ENCODE measurements at regions of chr14 and their contacts with region 1.

Region 1: GRCh38 chr14:24013654-24014514 is 25.2 kb downstream of the DHRS4L2 start:
- DNase-seq: peak; percentile 60 to 75
- H3K4me3 ChIP-seq: no peak overlapping the region
- H3K4me1 ChIP-seq: no peaks in the 10 kb centered on the region
- H3K27me3 ChIP-seq: no peaks in the 10 kb centered on the region

Region 2: DNA sequence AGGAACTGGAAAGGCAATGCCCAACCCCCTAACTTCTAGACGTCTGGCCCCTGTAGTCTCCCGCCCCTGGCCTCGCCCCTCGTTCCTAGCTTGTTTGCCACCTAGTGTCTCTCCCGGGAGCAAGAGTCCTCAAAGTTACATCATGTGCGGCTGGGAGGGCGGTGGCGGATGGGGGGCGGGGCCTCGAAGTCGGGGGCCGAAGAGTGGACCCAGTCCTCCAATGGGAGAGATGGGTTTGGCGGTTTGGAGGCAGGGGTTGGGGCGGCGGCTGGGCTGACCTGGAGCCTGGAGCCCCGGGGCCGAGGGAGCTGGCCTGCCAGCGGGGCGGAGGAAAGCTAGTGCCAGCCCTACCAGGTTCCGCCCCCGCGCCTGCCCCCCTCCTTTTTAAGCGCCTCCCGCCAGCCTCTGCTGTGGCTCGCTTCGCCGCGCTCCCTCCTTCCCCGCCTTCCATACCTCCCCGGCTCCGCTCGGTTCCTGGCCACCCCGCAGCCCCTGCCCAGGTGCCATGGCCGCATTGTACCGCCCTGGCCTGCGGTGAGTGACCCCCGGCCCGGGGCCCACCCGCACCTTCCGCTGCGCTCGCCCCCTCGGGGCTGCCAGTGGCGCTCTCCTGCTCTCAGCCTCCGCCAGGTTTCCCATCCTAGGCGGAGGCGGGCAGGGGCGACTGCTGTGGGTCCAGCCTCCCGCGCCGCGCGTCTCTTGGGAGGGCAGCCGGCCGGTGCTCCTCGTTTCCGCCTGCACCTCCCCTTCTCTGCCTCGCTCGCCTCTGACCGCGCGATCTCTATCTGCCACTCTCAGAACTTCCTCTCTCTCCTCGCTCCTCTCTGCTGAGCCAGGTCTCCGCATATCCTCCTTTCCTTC is 80.2 kb after region 1 on chr14 and contains the start of gene PCK2:
- in situ Hi-C with region 1: loop called (anchors 10 kb)
- DNase-seq: peak; percentile 92 to 98
- H3K4me3 ChIP-seq: peak within 1 kb of the TSS; percentile 97
- H3K4me1 ChIP-seq: peaks cover 11% of the 10 kb centered on the region
- H3K27me3 ChIP-seq: no peaks in the 10 kb centered on the region

Region 3: GRCh38 chr14:24299255-24300195 is 285.6 kb after region 1 on chr14 and contains the starts of genes DHRS1 and NOP9:
- in situ Hi-C with region 1: loop called (anchors 5 kb)
- DNase-seq: peak; percentile 70 to 93
- H3K4me3 ChIP-seq: peak within 1 kb of the TSS; percentile 76
- H3K4me1 ChIP-seq: peaks cover 12% of the 10 kb centered on the region
- H3K27me3 ChIP-seq: no peaks in the 10 kb centered on the region

Measured in HAP-1 (cell line).